Motor neuron (in vitro differentiated cells): ENCODE measurements at regions of chr9 and their contacts with region 1.

Region 1: DNA sequence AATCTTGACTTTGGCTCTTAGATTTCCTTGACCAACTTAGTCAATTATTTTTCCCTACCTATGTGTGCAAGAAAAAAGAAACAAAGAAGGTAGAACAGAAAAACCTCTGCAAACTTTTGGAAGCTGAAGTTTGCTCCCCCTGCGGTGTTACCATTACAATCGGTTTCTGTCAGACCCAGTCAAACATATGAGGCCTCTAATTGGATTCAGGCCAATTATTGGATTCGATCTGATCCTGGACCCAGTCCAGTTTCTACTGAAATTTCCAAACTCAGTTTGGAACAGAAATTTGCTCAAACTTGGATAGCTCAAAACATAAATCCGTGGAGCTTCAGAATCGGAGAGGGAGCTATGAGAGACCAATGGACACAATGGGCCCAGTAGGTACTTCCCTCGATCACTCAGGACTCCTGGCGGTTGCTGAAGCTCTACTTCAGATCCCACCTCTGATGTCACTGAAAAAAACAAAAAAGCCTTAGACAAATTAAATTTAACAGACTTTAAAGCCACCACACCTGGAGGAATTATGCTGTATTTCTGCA is 523.9 kb downstream of the DMRTA1 start:
- ATAC-seq: no peak
- H3K4me3 ChIP-seq: no peak overlapping the region
- H3K27ac ChIP-seq: no peak overlapping the region
- H3K4me1 ChIP-seq: peaks cover 0 to 19% of the 10 kb centered on the region in 2 donors

Region 2: DNA sequence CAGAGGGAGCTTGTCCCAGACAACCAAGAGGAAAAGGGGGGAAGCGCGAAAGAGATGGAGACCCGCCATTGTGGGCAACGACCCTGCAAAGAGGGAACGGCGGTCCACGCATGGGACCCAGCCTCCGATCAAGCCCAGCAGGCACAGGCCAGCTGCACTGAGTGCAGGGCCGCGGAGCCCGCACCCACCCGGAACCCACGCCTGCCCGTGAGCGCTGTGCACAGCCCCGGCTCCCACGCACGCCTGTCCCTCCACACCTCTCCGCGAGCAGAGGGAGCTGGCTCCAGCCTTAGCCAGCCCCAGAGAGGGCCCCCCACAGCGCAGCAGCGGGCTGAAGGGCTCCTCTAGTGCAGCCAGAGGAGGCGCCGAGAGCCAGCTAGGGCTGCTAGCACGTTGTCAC is 107.4 kb before region 1 on chr9:
- in situ Hi-C with region 1: loop called in 1 of 9 experiments (anchors 25 kb)
- ATAC-seq: no peak
- H3K4me3 ChIP-seq: no peak overlapping the region
- H3K27ac ChIP-seq: no peak overlapping the region
- H3K4me1 ChIP-seq: no peaks in the 10 kb centered on the region